Transverse colon (tissue), 4 donors: ENCODE measurements at regions of chr17 and their contacts with region 1.

Region 1: GRCh38 chr17:16438557-16439302 is 23.4 kb downstream of the TRPV2 start:
- DNase-seq: peak; percentile 96
- H3K4me3 ChIP-seq: peak overlapping the region; percentile 63 to 96 (median 79)
- H3K27ac ChIP-seq: peak overlapping the region; percentile 84 to 97 (median 94)
- H3K4me1 ChIP-seq: peaks cover 14 to 41% (median 30%) of the 10 kb centered on the region in 4 donors
- H3K27me3 ChIP-seq: no peaks in the 10 kb centered on the region
- CTCF ChIP-seq: no peak
- EP300 ChIP-seq: no peak
- POLR2A ChIP-seq: peak; percentile 96

Region 2: GRCh38 chr17:16027708-16028584 is 410.8 kb before region 1 on chr17:
- in situ Hi-C with region 1: no loop called
- intact Hi-C with region 1: no loop called
- DNase-seq: no peak
- H3K4me3 ChIP-seq: no peak overlapping the region
- H3K27ac ChIP-seq: peak overlapping the region; percentile 9 to 49 (median 36)
- H3K4me1 ChIP-seq: peaks cover 0 to 9% (median 0%) of the 10 kb centered on the region in 4 donors
- H3K27me3 ChIP-seq: no peaks in the 10 kb centered on the region
- CTCF ChIP-seq: no peak
- EP300 ChIP-seq: no peak
- POLR2A ChIP-seq: no peak

Region 3: GRCh38 chr17:16217002-16217635 is 221.6 kb before region 1 on chr17 and contains the start of gene PIGL:
- in situ Hi-C with region 1: no loop called
- intact Hi-C with region 1: no loop called
- DNase-seq: peak; percentile 91
- H3K4me3 ChIP-seq: peak within 1 kb of the TSS; percentile 71 to 99 (median 82)
- H3K27ac ChIP-seq: peak within 1 kb of the TSS; percentile 97 to 99 (median 98)
- H3K4me1 ChIP-seq: peaks cover 11 to 46% (median 37%) of the 10 kb centered on the region in 4 donors
- H3K27me3 ChIP-seq: no peaks in the 10 kb centered on the region
- CTCF ChIP-seq: peak in 1 of 5 experiments; percentile 10
- EP300 ChIP-seq: no peak
- POLR2A ChIP-seq: peak; percentile 54
- total RNA-seq, gene PIGL: 60.9 to 142 (median 101) TPM

Region 4: GRCh38 chr17:16380640-16381495 is 57.9 kb before region 1 on chr17 and contains the start of gene UBB:
- in situ Hi-C with region 1: loop called in 2 of 4 experiments (anchors 10 kb)
- intact Hi-C with region 1: loop called (anchors 10 kb)
- DNase-seq: peak; percentile 97
- H3K4me3 ChIP-seq: peak within 1 kb of the TSS; percentile 27 to 80 (median 58)
- H3K27ac ChIP-seq: peak within 1 kb of the TSS; percentile 87 to 95 (median 92)
- H3K4me1 ChIP-seq: peaks cover 14 to 63% (median 30%) of the 10 kb centered on the region in 4 donors
- H3K27me3 ChIP-seq: no peaks in the 10 kb centered on the region
- CTCF ChIP-seq: peak in 1 of 5 experiments; percentile 10
- EP300 ChIP-seq: peak; percentile 61
- POLR2A ChIP-seq: peak; percentile 99
- total RNA-seq, gene UBB: 426 to 1,167 (median 805) TPM